HEK293 (cell line): ENCODE measurements at regions of chr11 and their contacts with region 1.

Region 1: DNA sequence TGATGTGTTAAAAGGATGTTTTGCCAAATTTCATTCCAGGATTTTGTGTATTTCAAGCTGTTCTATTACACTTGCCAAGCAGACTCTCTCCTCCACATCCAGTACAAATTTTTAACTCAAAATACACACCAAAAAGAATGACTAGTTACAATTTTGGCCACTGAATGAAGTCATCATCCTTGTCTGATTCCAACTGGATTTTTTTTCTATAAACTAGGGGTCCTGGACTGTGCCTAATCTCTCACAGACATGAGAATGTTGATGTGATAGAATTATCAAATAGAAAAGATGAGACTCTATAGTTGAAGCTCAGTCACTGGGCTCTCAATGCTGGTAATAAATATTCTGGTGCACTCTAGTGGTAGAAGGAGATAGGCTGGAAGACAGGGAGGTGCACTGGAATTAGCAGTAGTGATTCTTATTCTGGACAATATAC is 85.8 kb downstream of the FANCF start:
- H3K4me3 ChIP-seq: no peak overlapping the region
- H3K27ac ChIP-seq: no peak overlapping the region
- H3K4me1 ChIP-seq: no peaks in the 10 kb centered on the region
- CTCF ChIP-seq: no peak

Region 2: DNA sequence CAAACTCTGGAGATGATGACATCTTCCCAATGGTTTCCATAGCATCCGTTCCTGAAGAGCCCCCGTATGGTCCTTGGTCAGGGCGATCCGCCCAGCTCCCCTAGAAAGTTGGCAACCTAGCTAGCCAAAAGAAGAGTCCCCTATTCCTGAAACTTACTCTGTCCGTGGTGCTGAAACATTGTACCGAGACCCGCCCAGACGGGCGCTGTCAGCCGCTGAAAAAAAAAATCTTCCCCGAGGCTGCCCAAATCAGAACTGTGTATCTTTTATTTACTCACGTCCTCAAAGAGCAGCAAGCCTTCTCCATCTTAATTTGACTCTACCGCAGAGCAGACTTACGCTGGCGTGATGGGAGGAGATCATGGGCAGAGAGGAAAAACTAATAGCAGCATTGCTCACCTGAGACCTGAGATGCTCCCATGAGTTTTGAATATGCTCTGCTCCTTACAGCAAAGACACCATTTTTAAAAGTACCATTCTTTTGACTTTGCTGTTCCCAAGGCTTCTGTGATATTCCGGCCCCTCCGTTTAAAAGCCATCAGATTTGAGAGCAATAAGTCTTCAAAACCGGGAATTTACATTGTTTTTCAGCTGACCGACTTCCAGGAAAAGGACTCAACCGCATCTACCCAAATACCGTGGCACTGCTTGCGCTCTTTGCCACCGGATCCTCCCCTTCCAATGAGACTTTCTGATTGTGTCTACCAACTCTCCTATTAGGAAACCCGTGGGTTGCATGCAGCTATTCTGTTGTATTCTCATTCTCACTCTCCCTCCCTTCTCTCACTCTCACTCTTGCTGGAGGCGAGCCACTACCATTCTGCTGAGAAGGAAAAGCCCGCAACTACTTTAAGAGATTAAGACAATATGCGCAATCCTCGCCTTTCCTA is 202.0 kb before region 1 on chr11 and contains the start of gene SLC17A6:
- CTCF ChIA-PET with region 1: interaction called, 19 read pairs
- POLR2A ChIA-PET with region 1: no interaction called
- H3K4me3 ChIP-seq: no peak within 1 kb of the TSS
- H3K27ac ChIP-seq: no peak within 1 kb of the TSS
- H3K4me1 ChIP-seq: no peaks in the 10 kb centered on the region
- CTCF ChIP-seq: no peak

Region 3: DNA sequence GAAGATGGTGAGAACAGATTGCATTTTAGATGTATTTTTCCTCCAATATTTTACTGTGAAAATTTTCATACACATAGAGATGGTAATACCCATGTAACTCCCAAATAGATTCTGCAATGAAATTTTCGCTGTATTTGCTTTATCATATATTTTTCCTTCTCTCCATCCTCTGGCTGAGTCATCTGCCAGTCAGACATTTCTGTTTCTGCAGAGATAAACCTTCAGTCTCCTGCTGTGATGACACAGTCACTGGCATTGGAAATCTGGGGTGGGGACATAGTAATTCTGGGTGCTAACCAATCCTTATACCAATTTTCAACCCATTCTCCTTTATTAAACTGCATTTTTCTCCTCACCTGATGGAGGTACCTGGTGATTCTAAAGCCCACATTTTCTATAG is 256.1 kb after region 1 on chr11:
- CTCF ChIA-PET with region 1: no interaction called
- POLR2A ChIA-PET with region 1: no interaction called
- H3K4me3 ChIP-seq: no peak overlapping the region
- H3K27ac ChIP-seq: no peak overlapping the region
- H3K4me1 ChIP-seq: no peaks in the 10 kb centered on the region
- CTCF ChIP-seq: no peak